CD4-positive, alpha-beta memory T cell (primary cell): ENCODE measurements at regions of chr11 and their contacts with region 1.

Region 1: GRCh38 chr11:35182317-35182939 is 43.5 kb downstream of the CD44 start:
- DNase-seq: peak in 1 of 5 donors; percentile 30
- H3K4me3 ChIP-seq: no peak overlapping the region
- H3K4me3 Mint-ChIP-seq: peak overlapping the region in 6 of 8 donors; percentile 30 to 82 (median 48)
- H3K27ac ChIP-seq: peak overlapping the region; percentile 13
- H3K27ac Mint-ChIP-seq: peak overlapping the region; percentile 73 to 95 (median 91)
- H3K4me1 ChIP-seq: peaks cover 88% of the 10 kb centered on the region
- H3K4me1 Mint-ChIP-seq: peaks cover 65 to 87% (median 75%) of the 10 kb centered on the region in 4 donors
- H3K27me3 ChIP-seq: no peaks in the 10 kb centered on the region
- H3K27me3 Mint-ChIP-seq: no peaks in the 10 kb centered on the region

Region 2: DNA sequence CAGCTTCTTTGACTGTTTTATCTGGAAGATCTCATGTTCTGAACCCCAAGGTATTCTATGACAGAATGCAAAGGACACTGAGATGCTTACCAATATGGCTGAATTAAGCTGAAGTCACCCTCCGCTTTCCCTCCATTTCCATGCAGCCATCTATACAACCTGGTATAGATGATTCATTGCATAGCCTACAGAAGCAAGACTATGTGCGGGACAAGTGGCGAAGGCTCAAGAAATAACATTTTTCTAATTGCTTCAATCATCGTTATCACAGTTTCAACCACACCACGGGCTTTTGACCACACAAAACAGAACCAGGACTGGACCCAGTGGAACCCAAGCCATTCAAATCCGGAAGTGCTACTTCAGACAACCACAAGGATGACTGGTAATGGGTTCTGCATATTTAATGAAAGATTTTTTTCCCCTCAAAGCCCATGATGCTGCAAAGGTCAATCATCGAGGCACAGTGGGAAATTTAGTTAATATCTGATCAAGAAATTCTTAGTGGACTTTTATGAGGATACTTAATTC is 18.4 kb after region 1 on chr11:
- CTCF ChIA-PET with region 1: interaction called, 6 read pairs
- POLR2A ChIA-PET with region 1: interaction called, 5 read pairs
- intact Hi-C with region 1: loop called (anchors 2 kb)
- DNase-seq: no peak
- H3K4me3 ChIP-seq: no peak overlapping the region
- H3K4me3 Mint-ChIP-seq: no peak overlapping the region
- H3K27ac ChIP-seq: no peak overlapping the region
- H3K27ac Mint-ChIP-seq: peak overlapping the region in 4 of 7 donors; percentile 17 to 77 (median 34)
- H3K4me1 ChIP-seq: peaks cover 46% of the 10 kb centered on the region
- H3K4me1 Mint-ChIP-seq: peaks cover 45 to 89% (median 69%) of the 10 kb centered on the region in 4 donors
- H3K27me3 ChIP-seq: no peaks in the 10 kb centered on the region
- H3K27me3 Mint-ChIP-seq: no peaks in the 10 kb centered on the region

Region 3: DNA sequence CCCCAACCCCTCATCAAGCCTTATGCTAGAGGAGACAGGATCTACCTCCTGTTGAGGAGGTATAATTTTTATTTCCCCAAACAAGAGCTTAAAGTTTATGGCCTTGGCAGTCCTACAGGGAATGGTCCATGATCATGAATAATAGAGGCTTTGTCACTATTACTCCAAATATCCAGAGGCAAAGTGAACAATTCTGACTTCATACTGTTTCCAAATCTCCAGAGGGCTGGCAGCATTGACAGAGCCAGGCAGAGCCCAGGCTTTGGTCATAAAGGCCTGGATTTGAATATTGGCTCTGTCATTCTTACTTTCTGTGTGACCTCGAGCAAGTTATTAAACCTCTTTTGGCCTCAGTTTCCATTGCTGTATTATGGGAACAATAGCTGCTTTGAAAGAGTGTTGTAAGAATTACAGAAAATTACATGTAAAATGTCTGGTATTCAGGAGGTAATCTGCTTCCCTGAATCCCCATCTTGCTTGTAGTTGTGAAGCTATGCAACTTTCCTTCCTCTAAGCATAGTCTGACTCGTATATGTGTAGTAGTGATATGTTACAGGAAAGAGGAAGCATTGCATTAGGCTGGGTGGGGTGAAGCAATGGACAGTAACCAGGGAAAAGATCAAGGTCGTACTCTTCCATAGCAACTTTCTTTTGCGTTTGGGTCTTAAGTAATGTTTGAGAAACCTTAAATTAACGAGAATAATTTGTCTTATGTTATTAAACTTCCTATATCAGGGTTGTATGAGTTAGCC is 45.3 kb after region 1 on chr11:
- CTCF ChIA-PET with region 1: no interaction called
- POLR2A ChIA-PET with region 1: no interaction called
- intact Hi-C with region 1: no loop called
- DNase-seq: no peak
- H3K4me3 ChIP-seq: no peak overlapping the region
- H3K4me3 Mint-ChIP-seq: no peak overlapping the region
- H3K27ac ChIP-seq: no peak overlapping the region
- H3K27ac Mint-ChIP-seq: peak overlapping the region; percentile 1 to 84 (median 60)
- H3K4me1 ChIP-seq: peaks cover under 1% of the 10 kb centered on the region
- H3K4me1 Mint-ChIP-seq: peaks cover 8 to 30% (median 25%) of the 10 kb centered on the region in 4 donors
- H3K27me3 ChIP-seq: no peaks in the 10 kb centered on the region
- H3K27me3 Mint-ChIP-seq: no peaks in the 10 kb centered on the region

Region 4: DNA sequence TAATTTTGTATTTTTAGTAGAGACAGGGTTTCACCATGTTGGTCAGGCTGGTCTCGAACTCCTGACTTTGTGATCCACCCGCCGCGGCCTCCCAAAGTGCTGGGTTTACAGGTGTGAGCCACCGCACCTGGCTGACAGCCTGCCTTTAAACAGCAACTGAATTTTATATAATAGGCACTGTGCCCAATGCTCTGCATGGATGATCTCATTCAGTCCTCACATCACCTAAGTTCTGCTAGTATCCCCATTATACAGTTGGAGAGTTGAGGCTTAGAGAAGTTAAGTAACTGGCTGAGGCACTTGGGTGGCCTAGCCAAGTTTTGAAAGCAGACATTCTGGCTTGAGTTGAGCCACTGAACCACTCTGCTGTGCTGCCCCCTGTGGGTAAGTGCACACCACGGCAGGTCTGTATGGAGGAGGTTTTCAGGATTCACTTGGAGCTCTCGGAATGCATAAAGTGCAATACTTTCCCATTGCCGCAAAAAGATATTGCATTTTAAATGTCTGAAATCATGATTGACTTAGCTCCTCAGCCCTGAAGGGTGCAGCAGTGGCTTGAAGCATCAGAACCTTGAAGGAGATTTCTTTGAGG is 873.8 kb after region 1 on chr11:
- CTCF ChIA-PET with region 1: no interaction called
- POLR2A ChIA-PET with region 1: no interaction called
- intact Hi-C with region 1: no loop called
- DNase-seq: no peak
- H3K4me3 ChIP-seq: no peak overlapping the region
- H3K4me3 Mint-ChIP-seq: no peak overlapping the region
- H3K27ac ChIP-seq: no peak overlapping the region
- H3K27ac Mint-ChIP-seq: no peak overlapping the region
- H3K4me1 ChIP-seq: no peaks in the 10 kb centered on the region
- H3K4me1 Mint-ChIP-seq: no peaks in the 10 kb centered on the region
- H3K27me3 ChIP-seq: no peaks in the 10 kb centered on the region
- H3K27me3 Mint-ChIP-seq: peaks cover 6 to 11% of the 10 kb centered on the region in 2 donors